ENCODE measurements at regions of chr4 and their contacts with region 1.

Region 1: DNA sequence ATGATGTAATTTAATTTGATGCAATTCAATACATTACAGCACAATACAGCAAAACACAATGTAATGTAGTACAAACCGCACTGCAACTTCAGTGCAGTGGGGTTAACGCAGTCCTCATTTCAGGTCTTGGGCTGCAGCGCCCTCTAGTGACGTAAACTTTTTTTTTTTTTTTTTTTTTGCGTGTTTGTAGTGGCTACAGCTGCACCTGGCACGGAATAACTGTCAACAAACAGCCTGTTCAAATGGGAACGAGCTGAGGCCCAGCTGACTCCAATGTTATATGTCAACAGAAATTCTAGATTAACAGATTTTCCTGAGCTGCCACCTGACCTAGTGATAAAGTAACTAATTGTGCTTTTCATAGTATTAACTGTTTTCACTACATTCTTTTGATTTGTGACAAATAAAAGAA is 33.5 kb upstream of the RASSF6 start:
- DNase-seq: no peak
- ATAC-seq: peak; percentile 67
- H3K4me3 Mint-ChIP-seq: no peak overlapping the region
- H3K27ac Mint-ChIP-seq: no peak overlapping the region
- H3K4me1 Mint-ChIP-seq: no peaks in the 10 kb centered on the region
- H3K27me3 Mint-ChIP-seq: no peaks in the 10 kb centered on the region
- CTCF ChIP-seq: peak; percentile 59; the same call in 1 of the 2 replicates

Region 2: DNA sequence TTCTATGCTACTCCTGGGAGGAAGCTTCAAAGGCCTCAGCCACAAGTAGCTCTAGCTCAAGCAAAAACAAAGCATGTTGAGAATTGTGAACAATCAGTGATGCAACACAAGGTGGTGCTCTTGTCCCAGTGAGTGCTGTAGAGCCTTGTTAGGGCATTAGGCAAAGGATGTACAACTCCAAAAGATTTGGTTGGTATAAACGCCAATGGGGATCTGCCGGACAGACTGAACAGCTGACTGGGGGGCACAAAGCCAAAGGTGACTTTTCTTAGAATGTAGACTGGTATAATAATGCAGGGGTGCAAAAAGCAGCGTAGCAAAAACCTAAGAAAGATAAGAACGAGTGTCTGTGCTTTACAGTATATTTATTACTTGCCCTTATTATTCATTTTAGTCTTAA is 312.2 kb before region 1 on chr4:
- CTCF ChIA-PET with region 1: interaction called, 20 read pairs
- POLR2A ChIA-PET with region 1: interaction called, 4 read pairs
- DNase-seq: peak; percentile 50
- ATAC-seq: peak; percentile 95
- H3K4me3 Mint-ChIP-seq: no peak overlapping the region
- H3K27ac Mint-ChIP-seq: no peak overlapping the region
- H3K4me1 Mint-ChIP-seq: peaks cover 29% of the 10 kb centered on the region
- H3K27me3 Mint-ChIP-seq: no peaks in the 10 kb centered on the region
- CTCF ChIP-seq: peak; percentile 34; the same call in 1 of the 2 replicates

Region 3: DNA sequence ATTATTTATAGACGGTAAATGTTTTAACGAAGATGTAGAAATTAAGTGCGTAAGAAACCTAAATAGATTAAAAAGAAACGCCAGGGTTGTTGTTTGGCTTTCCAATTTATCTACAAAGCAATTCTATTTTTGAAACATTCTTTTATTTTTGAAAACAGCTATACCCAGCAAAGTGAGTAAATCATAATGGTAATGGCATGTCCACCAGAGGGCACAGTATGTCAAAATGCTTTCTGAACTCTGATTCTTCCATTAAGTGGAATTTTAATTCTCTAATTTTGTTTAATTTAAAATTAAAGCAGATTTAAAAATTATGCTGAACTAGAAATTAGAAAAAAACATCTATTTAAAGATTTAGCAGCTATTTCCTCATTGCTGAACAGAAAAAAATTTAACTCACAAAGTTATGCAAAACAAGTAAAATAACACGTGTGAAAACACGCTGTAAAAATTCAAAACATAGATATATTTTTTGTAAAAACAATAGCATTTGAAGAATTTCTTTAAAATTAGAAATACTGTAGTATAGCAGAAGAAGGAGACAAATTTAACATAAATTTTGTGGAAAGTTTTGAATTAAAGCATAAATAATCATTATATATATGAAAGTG is 60.0 kb before region 1 on chr4:
- CTCF ChIA-PET with region 1: interaction called, 12 read pairs
- POLR2A ChIA-PET with region 1: interaction called, 6 read pairs
- DNase-seq: no peak
- ATAC-seq: no peak
- H3K4me3 Mint-ChIP-seq: no peak overlapping the region
- H3K27ac Mint-ChIP-seq: no peak overlapping the region
- H3K4me1 Mint-ChIP-seq: peaks cover 8% of the 10 kb centered on the region
- H3K27me3 Mint-ChIP-seq: no peaks in the 10 kb centered on the region
- CTCF ChIP-seq: no peak

Region 4: DNA sequence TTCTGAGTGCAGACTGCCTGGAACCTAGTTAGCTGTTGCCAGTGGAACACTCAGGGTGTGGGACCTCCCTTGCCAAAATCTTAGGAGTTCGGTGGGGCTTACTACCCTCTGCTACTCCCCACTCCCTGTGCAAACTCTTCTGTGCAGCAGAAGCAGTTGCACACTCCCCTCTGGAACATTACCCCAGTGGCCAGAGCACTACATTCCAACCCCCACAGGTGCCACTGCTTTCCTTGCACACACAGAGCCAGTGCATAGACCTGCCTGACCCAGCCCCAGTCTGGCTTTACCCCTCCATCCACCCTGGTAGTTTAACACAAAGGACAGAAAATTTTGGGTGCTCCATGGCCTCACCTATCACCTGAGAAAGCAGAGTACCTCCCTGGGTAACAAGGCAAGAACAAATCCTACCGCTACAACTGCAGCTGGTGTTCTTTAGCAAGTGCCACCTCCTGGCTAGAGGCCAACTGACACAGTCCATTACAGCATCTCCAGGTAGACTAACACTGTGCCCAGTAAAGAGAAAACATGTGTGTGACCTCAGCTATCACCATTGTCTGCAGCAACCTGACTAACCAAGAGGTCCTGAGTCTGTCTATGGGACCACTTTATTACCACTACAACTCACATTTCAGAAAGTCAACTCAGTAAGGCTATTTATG is 22.0 kb before region 1 on chr4:
- CTCF ChIA-PET with region 1: no interaction called
- POLR2A ChIA-PET with region 1: no interaction called
- DNase-seq: no peak
- ATAC-seq: no peak
- H3K4me3 Mint-ChIP-seq: no peak overlapping the region
- H3K27ac Mint-ChIP-seq: no peak overlapping the region
- H3K4me1 Mint-ChIP-seq: no peaks in the 10 kb centered on the region
- H3K27me3 Mint-ChIP-seq: no peaks in the 10 kb centered on the region
- CTCF ChIP-seq: no peak

Region 5: DNA sequence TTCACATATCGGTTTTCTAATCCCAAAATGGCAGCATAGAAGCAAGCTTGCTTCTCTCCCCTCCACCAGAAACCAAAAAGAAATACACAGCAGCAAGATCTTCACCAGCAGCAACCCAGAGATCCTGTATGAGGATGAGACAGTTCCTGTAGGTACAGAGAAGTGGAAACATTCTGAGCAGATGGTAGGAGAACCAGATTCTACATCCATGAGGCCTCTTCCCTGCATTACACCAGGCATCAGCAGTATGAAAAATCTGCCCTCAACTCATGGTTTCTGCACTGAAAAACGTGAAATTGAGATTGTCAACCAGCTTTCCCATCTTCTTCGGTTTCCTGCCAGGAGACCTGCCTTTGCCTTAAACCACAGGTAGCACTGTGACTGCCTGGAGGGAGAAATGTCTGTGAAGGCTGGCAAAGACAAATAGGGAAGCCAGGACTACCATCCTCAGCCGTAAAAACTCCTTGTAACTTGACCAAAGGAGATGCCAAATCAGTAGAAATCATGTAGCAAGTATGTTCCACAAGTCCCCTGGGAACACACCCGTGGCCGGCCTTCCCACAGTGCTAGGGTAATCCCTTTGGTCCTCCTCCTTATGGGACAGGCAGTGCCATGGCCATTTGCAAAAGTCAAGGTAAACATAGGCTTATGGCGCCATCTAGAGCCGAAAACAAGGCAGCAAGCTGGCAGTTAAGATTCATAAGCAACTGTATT is 480.2 kb after region 1 on chr4:
- CTCF ChIA-PET with region 1: interaction called, 15 read pairs
- POLR2A ChIA-PET with region 1: no interaction called
- DNase-seq: peak; percentile 80
- ATAC-seq: peak; percentile 99
- H3K4me3 Mint-ChIP-seq: no peak overlapping the region
- H3K27ac Mint-ChIP-seq: no peak overlapping the region
- H3K4me1 Mint-ChIP-seq: peaks cover 6% of the 10 kb centered on the region
- H3K27me3 Mint-ChIP-seq: no peaks in the 10 kb centered on the region; the same call in 1 of the 2 replicates
- CTCF ChIP-seq: peak; percentile 63; the same call in 1 of the 2 replicates